Panc1 (cell line): ENCODE measurements at regions of chr4 and their contacts with region 1.

Region 1: GRCh38 chr4:71396382-71396781 is 57.6 kb downstream of the SLC4A4 start:
- DNase-seq: no peak
- ATAC-seq: no peak
- H3K4me3 ChIP-seq: no peak overlapping the region
- H3K27ac ChIP-seq: no peak overlapping the region
- H3K4me1 ChIP-seq: no peaks in the 10 kb centered on the region
- H3K27me3 ChIP-seq: no peaks in the 10 kb centered on the region
- CTCF ChIP-seq: no peak

Region 2: DNA sequence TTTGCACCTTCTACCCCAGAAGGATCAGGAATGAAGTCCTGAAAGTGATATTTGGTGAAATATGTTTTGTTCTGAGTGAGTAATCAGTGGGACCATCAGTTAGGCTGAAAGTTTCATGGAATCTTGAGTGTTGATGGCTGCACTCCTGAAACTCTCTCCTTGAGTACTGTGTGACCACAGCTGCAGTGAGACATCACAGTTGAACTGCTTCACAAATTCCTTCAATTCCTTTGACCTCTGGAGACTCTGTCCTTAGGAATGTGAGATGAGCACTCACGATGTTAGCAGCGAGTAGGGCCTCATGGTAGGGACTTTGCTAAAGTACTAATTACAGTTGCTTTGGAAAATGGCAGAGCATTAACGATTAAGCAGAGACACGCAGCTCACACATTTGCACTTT is 200.5 kb before region 1 on chr4:
- CTCF ChIA-PET with region 1: no interaction called
- POLR2A ChIA-PET with region 1: no interaction called
- in situ Hi-C with region 1: no loop called
- intact Hi-C with region 1: no loop called
- DNase-seq: no peak
- ATAC-seq: no peak
- H3K4me3 ChIP-seq: no peak overlapping the region
- H3K27ac ChIP-seq: no peak overlapping the region
- H3K4me1 ChIP-seq: no peaks in the 10 kb centered on the region
- H3K27me3 ChIP-seq: no peaks in the 10 kb centered on the region
- CTCF ChIP-seq: no peak

Region 3: GRCh38 chr4:71377561-71377960 is 18.8 kb before region 1 on chr4:
- CTCF ChIA-PET with region 1: no interaction called
- POLR2A ChIA-PET with region 1: no interaction called
- in situ Hi-C with region 1: no loop called
- intact Hi-C with region 1: no loop called
- DNase-seq: no peak
- ATAC-seq: no peak
- H3K4me3 ChIP-seq: no peak overlapping the region
- H3K27ac ChIP-seq: no peak overlapping the region
- H3K4me1 ChIP-seq: no peaks in the 10 kb centered on the region
- H3K27me3 ChIP-seq: no peaks in the 10 kb centered on the region
- CTCF ChIP-seq: no peak

Region 4: DNA sequence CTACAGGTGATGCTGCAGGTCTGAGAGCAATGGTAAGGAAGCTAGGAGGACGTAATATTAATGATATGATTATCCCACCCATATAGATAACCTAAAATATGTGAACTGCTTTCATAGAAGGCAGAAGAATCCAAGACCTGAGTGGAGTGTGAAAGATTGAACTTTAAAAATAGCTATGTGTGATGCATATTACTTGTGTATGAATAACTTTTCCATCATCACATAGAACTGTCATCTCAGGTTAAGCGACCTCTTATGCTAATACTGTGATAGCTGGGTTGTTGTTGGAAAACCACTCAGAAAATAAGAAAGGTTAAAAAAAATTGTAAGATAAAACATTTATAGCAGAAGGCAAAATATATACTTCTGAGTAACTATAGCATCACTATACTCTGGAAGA is 32.7 kb after region 1 on chr4:
- CTCF ChIA-PET with region 1: no interaction called
- POLR2A ChIA-PET with region 1: interaction called, 10 read pairs
- in situ Hi-C with region 1: no loop called
- intact Hi-C with region 1: no loop called
- DNase-seq: no peak
- ATAC-seq: no peak
- H3K4me3 ChIP-seq: no peak overlapping the region
- H3K27ac ChIP-seq: no peak overlapping the region
- H3K4me1 ChIP-seq: no peaks in the 10 kb centered on the region
- H3K27me3 ChIP-seq: no peaks in the 10 kb centered on the region
- CTCF ChIP-seq: no peak

Region 5: DNA sequence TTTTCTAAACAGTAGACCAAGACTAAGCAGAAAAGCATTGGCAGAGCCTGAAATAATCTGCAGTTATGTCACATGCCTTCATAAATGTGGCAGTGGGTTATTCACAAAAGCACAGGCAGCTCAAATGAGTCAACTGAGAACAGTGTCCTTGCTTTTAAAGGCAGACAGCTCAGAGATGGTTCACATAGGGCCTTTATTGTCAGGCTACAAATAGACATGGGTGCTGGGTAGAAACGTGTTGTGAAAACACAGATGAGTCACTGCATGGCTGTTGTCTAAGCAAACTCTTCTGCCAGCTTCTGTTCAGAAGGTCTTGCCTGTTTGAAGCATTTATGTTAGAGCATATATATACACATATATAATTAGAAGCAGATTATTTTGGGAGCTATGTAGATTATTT is 60.5 kb after region 1 on chr4:
- CTCF ChIA-PET with region 1: no interaction called
- POLR2A ChIA-PET with region 1: no interaction called
- in situ Hi-C with region 1: no loop called
- intact Hi-C with region 1: loop called (anchors 10 kb)
- DNase-seq: peak; percentile 1
- ATAC-seq: no peak
- H3K4me3 ChIP-seq: no peak overlapping the region
- H3K27ac ChIP-seq: no peak overlapping the region
- H3K4me1 ChIP-seq: no peaks in the 10 kb centered on the region
- H3K27me3 ChIP-seq: no peaks in the 10 kb centered on the region
- CTCF ChIP-seq: no peak

Region 6: DNA sequence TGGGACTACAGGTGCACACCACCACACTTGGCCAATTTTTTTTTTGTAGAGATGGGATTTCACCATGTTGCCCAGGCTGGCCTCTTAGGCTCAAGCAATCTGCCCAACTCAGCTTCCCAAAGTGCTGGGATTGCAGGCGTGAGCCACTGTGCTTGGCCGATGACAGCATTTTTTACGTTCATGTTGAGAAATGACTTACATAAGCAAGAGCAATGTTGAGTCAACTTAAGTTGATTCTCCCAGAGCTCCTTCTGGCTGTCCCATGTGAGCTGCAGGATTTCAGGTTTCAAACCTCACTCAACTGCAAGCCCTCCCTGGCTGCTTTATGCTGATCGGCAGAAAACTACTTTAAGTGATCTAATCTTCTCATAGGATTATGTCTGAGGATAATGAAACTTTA is 300.6 kb after region 1 on chr4:
- CTCF ChIA-PET with region 1: no interaction called
- POLR2A ChIA-PET with region 1: no interaction called
- in situ Hi-C with region 1: no loop called
- intact Hi-C with region 1: no loop called
- DNase-seq: no peak
- ATAC-seq: no peak
- H3K4me3 ChIP-seq: no peak overlapping the region
- H3K27ac ChIP-seq: no peak overlapping the region
- H3K4me1 ChIP-seq: no peaks in the 10 kb centered on the region
- H3K27me3 ChIP-seq: no peaks in the 10 kb centered on the region
- CTCF ChIP-seq: no peak